Activated T-helper 1 cell treated with anti-CD3 and anti-CD28 coated beads, Interleukin-12 subunit alpha, Interleukin-12 subunit beta, Interleukin-2, Interleukin-4 antibody, amounts not matched to agents 30 ng/mL and 10 ng/mL and 1 ng/mL, durations not matched to agents 14 hours and 24 hours and 36 hours (primary cell): ENCODE measurements at regions of chr10 and their contacts with region 1.

Region 1: DNA sequence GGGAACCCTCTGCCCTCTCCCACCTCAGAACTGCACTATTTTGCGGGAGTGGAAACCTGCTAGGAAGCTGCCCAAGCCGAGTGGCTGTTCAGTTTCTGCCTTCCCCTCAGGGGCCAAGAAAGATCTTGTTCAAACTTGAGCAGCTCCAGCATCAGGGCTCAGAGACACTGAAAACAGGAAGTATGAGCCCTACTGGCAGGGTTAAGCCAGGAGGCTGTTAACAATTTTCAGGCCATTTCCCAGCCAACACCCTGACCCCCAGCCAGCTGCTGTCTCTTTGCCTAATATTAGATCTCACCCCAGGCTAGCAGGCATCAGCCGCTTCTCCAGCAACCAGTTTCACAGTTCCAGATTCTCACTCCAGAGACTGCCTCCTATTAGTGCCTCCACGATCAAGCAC is 9.2 kb downstream of the PLAU start:
- DNase-seq: no peak
- H3K4me3 Mint-ChIP-seq: no peak overlapping the region
- H3K27ac Mint-ChIP-seq: no peak overlapping the region
- H3K4me1 Mint-ChIP-seq: peaks cover 27% of the 10 kb centered on the region
- H3K27me3 Mint-ChIP-seq: peaks cover 33% of the 10 kb centered on the region

Region 2: DNA sequence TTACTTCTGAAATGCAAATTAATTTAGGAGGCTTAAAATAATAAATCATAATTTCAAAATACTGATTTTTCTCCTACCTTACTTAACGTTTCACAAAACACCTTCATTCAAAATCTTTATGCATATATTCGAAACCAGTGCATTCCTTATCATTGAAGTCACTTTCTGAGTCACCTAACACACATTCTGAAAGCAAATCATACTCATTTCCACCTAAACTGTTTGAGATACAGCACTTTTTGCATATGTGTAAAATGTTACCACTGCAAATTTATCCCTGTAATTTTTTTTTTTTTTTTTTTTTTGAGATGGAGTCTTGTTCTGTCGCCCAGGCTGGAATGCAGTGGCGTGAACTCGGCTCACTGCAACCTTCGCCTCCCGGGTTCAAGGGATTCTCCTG is 439.9 kb before region 1 on chr10:
- intact Hi-C with region 1: no loop called
- DNase-seq: no peak
- H3K4me3 Mint-ChIP-seq: no peak overlapping the region
- H3K27ac Mint-ChIP-seq: no peak overlapping the region
- H3K4me1 Mint-ChIP-seq: peaks cover 27% of the 10 kb centered on the region
- H3K27me3 Mint-ChIP-seq: no peaks in the 10 kb centered on the region

Region 3: DNA sequence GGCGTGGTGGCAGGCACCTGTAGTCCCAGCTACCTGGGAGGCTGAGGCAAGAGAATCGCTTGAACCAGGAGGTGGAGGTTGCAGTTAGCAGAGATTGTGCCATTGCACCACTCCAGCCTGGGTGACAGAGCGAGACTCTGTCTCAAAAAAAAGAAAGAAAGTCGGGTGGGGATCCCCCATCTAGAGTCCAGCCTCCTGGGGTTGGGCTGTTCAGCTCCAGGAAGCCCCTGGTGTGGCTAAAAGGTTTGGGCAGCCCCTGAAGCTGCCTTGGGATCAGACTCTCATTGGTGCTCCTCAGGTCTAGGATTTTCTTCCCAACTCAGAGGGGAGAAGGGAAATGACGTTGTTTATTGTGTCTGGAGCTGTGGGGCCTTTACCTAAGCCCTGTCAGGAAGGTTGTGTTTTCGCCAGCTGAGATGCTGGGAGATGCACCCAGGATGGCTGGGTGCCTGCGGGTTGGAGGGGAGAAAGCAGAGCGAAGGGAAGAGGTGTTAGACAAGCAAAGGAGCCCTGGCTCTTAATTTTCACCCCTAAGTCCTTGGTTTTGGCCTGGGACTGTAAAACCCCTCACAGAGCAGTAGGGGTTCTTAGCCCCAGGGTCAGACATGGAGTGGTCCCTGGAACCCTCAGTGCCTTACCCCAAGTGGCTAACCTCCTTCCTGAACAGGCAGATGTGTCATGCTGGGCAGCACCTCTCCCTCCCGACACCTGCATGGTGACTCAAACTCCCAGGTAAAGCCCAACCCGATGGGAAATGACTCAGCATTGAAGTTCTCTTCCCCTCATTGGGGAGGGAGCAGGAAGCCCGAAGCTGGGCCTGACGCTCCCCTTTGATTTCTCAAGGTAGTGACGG is 11.9 kb after region 1 on chr10:
- intact Hi-C with region 1: loop called (anchors 1 kb)
- DNase-seq: peak; percentile 58
- H3K4me3 Mint-ChIP-seq: no peak overlapping the region
- H3K27ac Mint-ChIP-seq: peak overlapping the region; percentile 57
- H3K4me1 Mint-ChIP-seq: peaks cover 37% of the 10 kb centered on the region
- H3K27me3 Mint-ChIP-seq: peaks cover 23% of the 10 kb centered on the region

Region 4: DNA sequence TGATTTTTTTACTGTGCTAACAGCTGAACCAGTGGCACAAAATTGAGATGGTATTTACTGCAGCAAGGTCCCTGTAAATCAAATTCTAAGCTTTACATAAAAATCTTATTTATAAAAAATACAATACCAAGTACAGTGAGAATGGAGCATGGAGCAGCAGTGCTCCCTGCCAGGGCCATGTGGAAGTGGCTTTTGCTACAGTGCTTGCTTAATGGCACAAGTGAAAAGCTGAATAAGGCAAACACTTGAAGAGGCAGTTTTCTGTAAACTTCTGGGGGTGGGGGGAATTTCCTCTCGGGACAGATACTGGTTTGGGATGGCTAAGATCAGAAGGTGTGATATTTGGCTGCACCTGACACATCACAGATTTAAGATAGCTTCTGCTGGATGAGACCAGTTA is 203.0 kb after region 1 on chr10:
- intact Hi-C with region 1: no loop called
- DNase-seq: no peak
- H3K4me3 Mint-ChIP-seq: no peak overlapping the region
- H3K27ac Mint-ChIP-seq: peak overlapping the region; percentile 52
- H3K4me1 Mint-ChIP-seq: peaks cover 25% of the 10 kb centered on the region
- H3K27me3 Mint-ChIP-seq: no peaks in the 10 kb centered on the region

Region 5: GRCh38 chr10:74871595-74872382 is 951.7 kb after region 1 on chr10:
- intact Hi-C with region 1: no loop called
- DNase-seq: no peak
- H3K4me3 Mint-ChIP-seq: peak overlapping the region; percentile 76
- H3K27ac Mint-ChIP-seq: peak overlapping the region; percentile 81
- H3K4me1 Mint-ChIP-seq: peaks cover 27% of the 10 kb centered on the region
- H3K27me3 Mint-ChIP-seq: no peaks in the 10 kb centered on the region